ENCODE measurements at regions of chr3 and their contacts with region 1.

Region 1: DNA sequence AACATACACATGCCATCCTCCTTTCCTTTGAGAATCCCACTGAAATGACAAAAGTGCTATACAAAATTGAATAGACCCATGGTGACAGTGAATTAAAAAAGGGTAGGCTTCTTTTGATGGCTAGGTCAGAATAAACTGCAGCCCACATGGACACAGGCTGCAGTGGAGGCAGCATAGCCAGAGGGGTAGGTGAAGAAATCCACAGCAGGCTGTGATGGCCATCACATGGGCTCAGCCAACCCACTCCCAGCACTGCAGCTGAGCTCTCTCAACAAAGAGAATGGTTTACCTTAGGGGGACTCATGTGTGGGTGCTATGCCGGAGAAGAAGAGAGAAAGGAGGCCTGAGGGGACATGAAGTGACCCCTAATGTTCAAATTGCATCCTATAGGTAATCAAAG is 331.1 kb downstream of the CHST2 start:
- DNase-seq: no peak
- H3K4me3 ChIP-seq: no peak overlapping the region
- H3K27ac ChIP-seq: no peak overlapping the region
- H3K4me1 ChIP-seq: no peaks in the 10 kb centered on the region
- H3K27me3 ChIP-seq: no peaks in the 10 kb centered on the region
- CTCF ChIP-seq: no peak
- POLR2A ChIP-seq: no peak

Region 2: DNA sequence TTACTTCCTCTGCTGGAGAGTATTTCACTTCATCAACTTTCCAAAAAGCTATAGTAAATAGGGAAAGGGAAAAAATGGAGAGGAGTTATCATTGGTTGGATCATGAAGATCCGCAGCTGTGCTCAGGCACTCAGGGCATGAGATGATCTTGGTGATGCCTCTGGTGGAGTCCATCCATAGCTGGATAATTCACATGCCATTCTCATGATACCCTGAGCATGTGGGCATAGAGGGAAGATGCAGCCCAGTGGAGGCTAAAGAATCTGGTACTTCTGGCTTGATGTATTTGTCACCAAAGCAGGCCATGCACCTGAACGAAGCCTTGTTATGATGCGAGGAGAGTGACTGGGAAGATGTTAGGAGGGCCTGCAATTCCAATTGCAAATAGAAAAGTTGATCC is 180.9 kb before region 1 on chr3:
- intact Hi-C with region 1: loop called (anchors 5 kb)
- DNase-seq: no peak
- H3K4me3 ChIP-seq: no peak overlapping the region
- H3K27ac ChIP-seq: no peak overlapping the region
- H3K4me1 ChIP-seq: peaks cover 0 to 6% of the 10 kb centered on the region in 2 donors
- H3K27me3 ChIP-seq: no peaks in the 10 kb centered on the region
- CTCF ChIP-seq: no peak
- POLR2A ChIP-seq: no peak

Region 3: GRCh38 chr3:143469159-143469558 is 18.5 kb after region 1 on chr3:
- intact Hi-C with region 1: no loop called
- DNase-seq: no peak
- H3K4me3 ChIP-seq: no peak overlapping the region
- H3K27ac ChIP-seq: no peak overlapping the region
- H3K4me1 ChIP-seq: no peaks in the 10 kb centered on the region
- H3K27me3 ChIP-seq: no peaks in the 10 kb centered on the region
- CTCF ChIP-seq: no peak
- POLR2A ChIP-seq: no peak

Region 4: DNA sequence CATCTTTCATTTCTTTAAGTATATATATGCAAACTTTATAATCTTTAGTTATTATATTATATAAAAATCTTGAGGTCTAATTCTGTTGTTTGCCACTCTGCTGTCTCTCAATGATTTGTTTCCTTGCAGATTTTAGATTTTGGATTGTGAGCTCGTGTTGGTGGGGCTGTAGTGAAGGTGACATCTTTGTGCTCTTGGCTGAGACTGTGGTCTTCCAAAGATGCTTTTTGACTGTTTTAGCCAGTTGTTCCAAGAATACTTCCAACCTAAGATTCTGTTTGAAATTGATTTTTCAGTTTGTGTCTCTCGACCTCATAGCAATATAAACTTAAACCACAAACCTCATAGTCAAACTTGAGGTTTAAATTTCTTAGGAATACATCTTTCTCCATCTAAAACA is 71.2 kb after region 1 on chr3:
- intact Hi-C with region 1: loop called (anchors 2 kb)
- DNase-seq: no peak
- H3K4me3 ChIP-seq: no peak overlapping the region
- H3K27ac ChIP-seq: no peak overlapping the region
- H3K4me1 ChIP-seq: no peaks in the 10 kb centered on the region
- H3K27me3 ChIP-seq: no peaks in the 10 kb centered on the region
- CTCF ChIP-seq: no peak
- POLR2A ChIP-seq: no peak

Measured in breast epithelium (tissue), 4 donors.